ENCODE measurements at regions of chr11 and their contacts with region 1.

Region 1: DNA sequence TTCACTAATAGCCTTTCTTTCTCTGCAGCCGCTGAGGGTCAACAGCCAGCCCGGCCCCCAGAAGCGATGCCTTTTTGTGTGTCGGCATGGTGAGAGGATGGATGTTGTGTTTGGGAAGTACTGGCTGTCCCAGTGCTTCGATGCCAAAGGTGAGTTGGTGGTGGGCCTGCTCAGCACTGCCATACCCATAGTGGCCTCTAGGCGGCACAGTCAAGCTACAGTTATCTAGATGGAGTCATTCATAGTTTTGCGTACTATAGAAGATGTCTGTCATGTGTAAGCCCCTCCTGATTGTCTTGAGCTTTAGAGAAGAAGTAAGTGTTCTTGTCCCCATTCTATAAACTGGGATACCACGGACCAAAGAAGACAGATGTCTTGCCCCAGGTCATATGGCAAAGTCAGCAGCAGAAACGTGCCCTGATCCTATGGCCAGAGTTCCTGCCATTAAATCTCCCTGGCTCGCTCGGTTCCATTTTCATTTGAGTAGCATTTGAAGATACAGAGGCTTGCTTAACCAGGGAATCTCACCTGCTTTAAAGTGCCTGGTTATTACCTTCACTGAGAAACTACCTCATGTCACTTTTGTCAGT is 42.1 kb upstream of the CRTAM start:
- DNase-seq: peak; percentile 30 to 52 (median 52)
- H3K4me3 ChIP-seq: no peak overlapping the region
- H3K4me3 Mint-ChIP-seq: no peak overlapping the region
- H3K27ac ChIP-seq: no peak overlapping the region
- H3K27ac Mint-ChIP-seq: peak overlapping the region in 2 of 7 donors; percentile 50 to 58
- H3K4me1 ChIP-seq: peaks cover 0 to 9% of the 10 kb centered on the region in 2 donors
- H3K4me1 Mint-ChIP-seq: peaks cover 11% of the 10 kb centered on the region
- H3K27me3 ChIP-seq: no peaks in the 10 kb centered on the region
- H3K27me3 Mint-ChIP-seq: peaks cover 0 to 1% (median 0%) of the 10 kb centered on the region in 3 donors
- CTCF ChIP-seq: peak; percentile 96

Region 2: GRCh38 chr11:122853971-122854446 is 57.8 kb after region 1 on chr11:
- intact Hi-C with region 1: loop called (anchors 5 kb)
- DNase-seq: peak; percentile 40 to 72 (median 71)
- H3K4me3 ChIP-seq: no peak overlapping the region
- H3K4me3 Mint-ChIP-seq: no peak overlapping the region
- H3K27ac ChIP-seq: no peak overlapping the region
- H3K27ac Mint-ChIP-seq: peak overlapping the region in 2 of 7 donors; percentile 25 to 68
- H3K4me1 ChIP-seq: peaks cover 45 to 46% of the 10 kb centered on the region in 2 donors
- H3K4me1 Mint-ChIP-seq: peaks cover 44% of the 10 kb centered on the region
- H3K27me3 ChIP-seq: no peaks in the 10 kb centered on the region
- H3K27me3 Mint-ChIP-seq: peaks cover 0 to 4% (median 1%) of the 10 kb centered on the region in 3 donors
- CTCF ChIP-seq: peak; percentile 85

Region 3: GRCh38 chr11:123020968-123021367 is 224.7 kb after region 1 on chr11:
- intact Hi-C with region 1: loop called in 1 of 2 experiments (anchors 2 kb)
- DNase-seq: peak; percentile 49 to 69 (median 64)
- H3K4me3 ChIP-seq: no peak overlapping the region
- H3K4me3 Mint-ChIP-seq: no peak overlapping the region
- H3K27ac ChIP-seq: no peak overlapping the region
- H3K27ac Mint-ChIP-seq: no peak overlapping the region
- H3K4me1 ChIP-seq: peaks cover 5 to 13% of the 10 kb centered on the region in 2 donors
- H3K4me1 Mint-ChIP-seq: peaks cover 9% of the 10 kb centered on the region
- H3K27me3 ChIP-seq: no peaks in the 10 kb centered on the region
- H3K27me3 Mint-ChIP-seq: peaks cover 4 to 7% (median 5%) of the 10 kb centered on the region in 3 donors
- CTCF ChIP-seq: peak; percentile 71

Region 4: GRCh38 chr11:123054301-123055065 is 258.3 kb after region 1 on chr11:
- intact Hi-C with region 1: loop called in 1 of 2 experiments (anchors 10 kb)
- DNase-seq: peak; percentile 54 to 75 (median 59)
- H3K4me3 ChIP-seq: no peak overlapping the region
- H3K4me3 Mint-ChIP-seq: no peak overlapping the region
- H3K27ac ChIP-seq: peak overlapping the region in 1 of 2 donors; percentile 5
- H3K27ac Mint-ChIP-seq: peak overlapping the region in 3 of 7 donors; percentile 55 to 76 (median 63)
- H3K4me1 ChIP-seq: peaks cover 7 to 20% of the 10 kb centered on the region in 2 donors
- H3K4me1 Mint-ChIP-seq: peaks cover 32% of the 10 kb centered on the region
- H3K27me3 ChIP-seq: no peaks in the 10 kb centered on the region
- H3K27me3 Mint-ChIP-seq: peaks cover 0 to 2% (median 0%) of the 10 kb centered on the region in 3 donors
- CTCF ChIP-seq: peak; percentile 82

Measured in CD14-positive monocyte (primary cell).